Activated B cell treated with CpG ODN at 0.5 μM for 24 hours (primary cell): ENCODE measurements at regions of chr6 and their contacts with region 1.

Region 1: DNA sequence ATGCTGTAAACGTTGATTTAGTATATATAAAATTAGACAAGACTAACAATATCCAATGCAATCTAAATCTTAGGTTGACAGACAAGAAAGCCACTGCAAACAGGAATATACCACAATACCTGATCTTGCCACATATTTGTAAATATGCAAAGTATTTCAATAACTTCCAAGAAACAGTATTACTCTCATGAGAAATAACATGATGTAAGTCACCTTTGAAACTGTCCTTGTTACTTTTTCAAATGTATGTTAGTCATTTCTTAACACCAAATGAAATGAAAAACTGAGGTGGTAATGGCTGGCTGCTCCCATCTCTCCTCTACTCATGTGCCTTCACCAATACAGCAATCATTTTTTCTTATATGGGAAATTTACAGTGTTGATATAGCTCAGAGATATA is 118.7 kb downstream of the ATG5 start:
- DNase-seq: no peak
- ATAC-seq: no peak
- H3K4me3 Mint-ChIP-seq: no peak overlapping the region
- H3K27ac Mint-ChIP-seq: no peak overlapping the region
- H3K4me1 Mint-ChIP-seq: peaks cover 8% of the 10 kb centered on the region
- H3K27me3 Mint-ChIP-seq: no peaks in the 10 kb centered on the region
- CTCF ChIP-seq: no peak

Region 2: DNA sequence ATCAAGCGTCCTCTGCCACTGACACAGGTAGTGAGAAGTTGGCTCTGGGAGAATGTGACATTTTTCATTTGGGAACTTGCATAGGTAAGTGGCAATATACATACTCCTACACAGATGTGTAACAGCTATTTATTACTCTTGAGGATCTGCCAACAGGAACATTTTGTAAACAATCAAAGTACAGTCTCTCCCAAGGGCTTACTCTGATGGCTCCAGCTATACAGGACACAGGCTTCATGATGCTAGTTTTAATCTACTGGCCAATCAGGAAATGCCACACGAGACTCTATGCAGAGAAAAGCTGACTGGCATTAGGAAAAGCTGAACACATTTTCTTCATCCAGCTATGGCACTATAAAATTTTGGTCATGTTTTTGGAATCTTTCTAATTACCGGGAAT is 1084.9 kb before region 1 on chr6:
- CTCF ChIA-PET with region 1: no interaction called
- POLR2A ChIA-PET with region 1: no interaction called
- intact Hi-C with region 1: no loop called
- DNase-seq: no peak
- ATAC-seq: no peak
- H3K4me3 Mint-ChIP-seq: no peak overlapping the region
- H3K27ac Mint-ChIP-seq: no peak overlapping the region
- H3K4me1 Mint-ChIP-seq: no peaks in the 10 kb centered on the region
- H3K27me3 Mint-ChIP-seq: peaks cover 7% of the 10 kb centered on the region
- CTCF ChIP-seq: no peak

Region 3: GRCh38 chr6:106194949-106195921 is 11.7 kb before region 1 on chr6:
- CTCF ChIA-PET with region 1: no interaction called
- POLR2A ChIA-PET with region 1: no interaction called
- intact Hi-C with region 1: loop called (anchors 2 kb)
- DNase-seq: no peak
- ATAC-seq: peak; percentile 77
- H3K4me3 Mint-ChIP-seq: peak overlapping the region; percentile 9
- H3K27ac Mint-ChIP-seq: peak overlapping the region; percentile 41
- H3K4me1 Mint-ChIP-seq: peaks cover 34% of the 10 kb centered on the region
- H3K27me3 Mint-ChIP-seq: no peaks in the 10 kb centered on the region
- CTCF ChIP-seq: no peak